ENCODE measurements at regions of chr5 and their contacts with region 1.

Region 1: DNA sequence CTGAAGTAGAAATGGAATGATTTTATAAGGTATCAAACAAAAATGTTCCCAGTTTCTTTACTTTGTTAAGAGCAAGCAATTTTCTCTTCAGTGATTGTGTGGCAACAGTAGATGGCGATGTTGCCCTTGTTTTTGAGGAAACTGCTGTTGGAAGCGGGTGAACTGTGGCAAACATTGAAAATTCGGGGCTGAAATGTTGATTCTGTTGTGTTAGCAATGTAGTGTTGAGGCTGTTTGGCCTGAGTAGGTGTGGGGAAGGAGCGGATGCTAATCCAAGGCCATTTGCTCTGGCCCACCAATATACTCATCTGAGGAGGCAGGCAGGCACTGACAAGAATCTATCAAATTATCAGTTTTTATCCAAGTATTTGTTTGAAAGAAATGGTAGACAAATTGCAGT is 129.8 kb downstream of the SLC12A2 start:
- DNase-seq: peak; percentile 56
- H3K4me3 ChIP-seq: no peak overlapping the region
- H3K27ac ChIP-seq: no peak overlapping the region
- H3K4me1 ChIP-seq: no peaks in the 10 kb centered on the region
- H3K27me3 ChIP-seq: no peaks in the 10 kb centered on the region
- CTCF ChIP-seq: peak; percentile 67

Region 2: GRCh38 chr5:127647361-127647958 is 565.9 kb before region 1 on chr5:
- intact Hi-C with region 1: no loop called
- DNase-seq: no peak
- H3K4me3 ChIP-seq: no peak overlapping the region
- H3K27ac ChIP-seq: no peak overlapping the region
- H3K4me1 ChIP-seq: peaks cover 3% of the 10 kb centered on the region
- H3K27me3 ChIP-seq: no peaks in the 10 kb centered on the region
- CTCF ChIP-seq: no peak

Region 3: DNA sequence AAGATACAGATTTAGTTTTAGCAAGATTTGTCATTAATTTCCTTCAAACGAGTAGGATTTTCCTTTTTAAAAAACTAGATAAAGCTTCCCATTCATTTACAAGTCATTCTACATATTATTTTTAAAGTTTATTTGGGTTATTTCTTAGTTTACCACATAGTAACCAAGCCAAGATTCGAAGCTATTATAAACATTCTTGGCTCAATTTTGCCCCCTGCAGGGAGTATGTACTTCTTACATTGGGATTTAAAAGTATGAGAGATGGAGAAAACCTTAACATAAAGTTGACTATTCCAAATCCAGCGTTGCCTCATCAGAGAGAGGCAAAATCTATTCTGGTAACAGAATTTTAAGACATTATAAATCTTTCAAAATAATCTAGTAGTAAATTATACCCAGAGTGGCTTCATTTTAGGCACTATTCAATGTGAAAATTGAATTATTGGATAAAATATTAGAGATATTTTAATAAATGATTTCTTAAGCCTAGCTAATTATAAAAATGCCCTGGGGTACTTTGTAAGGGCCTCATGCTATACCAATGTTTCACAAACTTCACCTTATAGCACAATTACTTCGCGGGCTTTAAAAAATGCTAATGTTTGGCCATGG is 285.6 kb after region 1 on chr5:
- intact Hi-C with region 1: loop called (anchors 2 kb)
- DNase-seq: peak; percentile 18
- H3K4me3 ChIP-seq: no peak overlapping the region
- H3K27ac ChIP-seq: no peak overlapping the region
- H3K4me1 ChIP-seq: no peaks in the 10 kb centered on the region
- H3K27me3 ChIP-seq: no peaks in the 10 kb centered on the region
- CTCF ChIP-seq: no peak

Region 4: GRCh38 chr5:128674825-128675446 is 461.6 kb after region 1 on chr5:
- intact Hi-C with region 1: loop called (anchors 5 kb)
- DNase-seq: peak; percentile 53
- H3K4me3 ChIP-seq: no peak overlapping the region
- H3K27ac ChIP-seq: no peak overlapping the region
- H3K4me1 ChIP-seq: no peaks in the 10 kb centered on the region
- H3K27me3 ChIP-seq: no peaks in the 10 kb centered on the region
- CTCF ChIP-seq: peak; percentile 45

Region 5: DNA sequence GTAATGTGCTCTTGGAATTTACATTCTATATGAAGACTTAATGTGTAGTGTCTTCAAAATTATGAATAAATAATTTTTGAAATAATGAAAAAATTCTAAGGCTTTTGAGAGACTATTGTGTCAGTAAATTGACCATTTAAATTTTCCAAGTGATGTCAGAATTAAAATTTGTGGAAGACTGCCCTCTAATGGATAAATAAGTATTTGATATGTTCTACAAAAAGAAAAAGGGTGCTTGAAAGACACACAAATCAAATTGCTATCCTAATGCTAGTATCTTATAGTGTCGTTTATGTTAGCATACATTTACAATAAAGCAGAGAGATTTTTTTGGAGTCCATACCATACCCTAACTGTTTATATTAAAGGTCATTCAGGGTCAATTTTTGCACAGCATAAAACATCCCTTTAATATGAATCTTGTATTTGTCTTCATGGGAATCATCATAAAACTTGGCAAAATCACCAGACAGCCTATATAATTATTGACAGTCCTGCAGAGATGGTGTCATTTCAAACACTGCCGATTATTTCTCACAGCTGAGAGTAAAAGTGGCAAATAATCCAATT is 631.1 kb after region 1 on chr5:
- intact Hi-C with region 1: loop called (anchors 5 kb)
- DNase-seq: no peak
- H3K4me3 ChIP-seq: no peak overlapping the region
- H3K27ac ChIP-seq: no peak overlapping the region
- H3K4me1 ChIP-seq: no peaks in the 10 kb centered on the region
- H3K27me3 ChIP-seq: no peaks in the 10 kb centered on the region
- CTCF ChIP-seq: peak; percentile 26